GM10248 (cell line): ENCODE measurements at regions of chr7 and their contacts with region 1.

Region 1: DNA sequence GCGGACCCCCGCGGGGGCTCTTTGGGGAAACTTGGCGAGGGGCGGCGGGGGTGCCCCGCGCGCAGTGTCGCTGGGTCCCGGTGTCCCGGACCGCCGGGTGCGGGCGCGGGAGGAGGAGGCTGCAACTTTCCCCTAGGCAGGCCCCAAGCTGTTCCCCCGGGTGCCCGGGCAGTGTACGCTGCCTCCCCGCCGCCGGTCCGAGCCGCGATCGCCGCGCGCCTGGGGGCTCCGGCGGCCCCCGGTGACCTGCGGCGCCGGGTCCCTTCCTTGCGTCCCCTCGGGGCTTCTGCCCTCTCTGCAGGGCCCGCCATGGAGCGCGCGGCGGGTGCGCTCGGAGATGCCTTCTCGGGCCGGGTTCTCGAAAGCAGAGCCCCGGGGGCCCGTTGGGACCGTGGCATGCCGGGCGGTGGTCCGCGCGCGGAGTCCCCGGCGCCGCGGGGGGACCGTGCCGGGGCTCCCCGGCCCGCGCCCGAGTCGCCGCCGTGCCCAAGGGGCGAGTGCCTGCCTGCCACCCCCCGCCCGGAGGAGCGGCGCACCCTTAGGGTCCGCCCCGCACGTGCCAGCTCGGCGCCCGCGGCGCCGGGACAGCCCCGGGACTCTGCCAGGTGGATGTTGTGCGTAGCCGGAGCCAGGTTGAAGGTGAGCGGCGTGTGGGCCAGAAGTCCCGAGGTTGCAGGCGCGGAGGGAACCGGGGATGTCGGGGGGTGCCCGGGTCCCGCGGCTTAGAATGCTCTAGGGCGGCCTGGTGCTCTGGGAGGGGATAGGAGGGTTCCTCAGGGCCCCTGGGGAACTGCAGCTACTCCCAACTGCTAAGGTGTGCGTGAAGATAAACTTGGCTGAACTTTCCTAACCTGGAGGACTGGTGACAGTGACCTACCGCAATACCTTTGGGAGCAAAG is at the start of gene CUX1:
- DNase-seq: peak; percentile 36
- CTCF ChIP-seq: no peak

Region 2: GRCh38 chr7:101743241-101743994 is 73.9 kb before region 1 on chr7:
- CTCF ChIA-PET with region 1: interaction called, 10 read pairs
- POLR2A ChIA-PET with region 1: no interaction called
- DNase-seq: peak; percentile 73
- CTCF ChIP-seq: peak; percentile 76

Region 3: GRCh38 chr7:101911800-101912715 is 94.8 kb after region 1 on chr7:
- CTCF ChIA-PET with region 1: no interaction called
- POLR2A ChIA-PET with region 1: no interaction called
- DNase-seq: no peak
- CTCF ChIP-seq: no peak